ENCODE measurements at regions of chr16 and their contacts with region 1.

Region 1: DNA sequence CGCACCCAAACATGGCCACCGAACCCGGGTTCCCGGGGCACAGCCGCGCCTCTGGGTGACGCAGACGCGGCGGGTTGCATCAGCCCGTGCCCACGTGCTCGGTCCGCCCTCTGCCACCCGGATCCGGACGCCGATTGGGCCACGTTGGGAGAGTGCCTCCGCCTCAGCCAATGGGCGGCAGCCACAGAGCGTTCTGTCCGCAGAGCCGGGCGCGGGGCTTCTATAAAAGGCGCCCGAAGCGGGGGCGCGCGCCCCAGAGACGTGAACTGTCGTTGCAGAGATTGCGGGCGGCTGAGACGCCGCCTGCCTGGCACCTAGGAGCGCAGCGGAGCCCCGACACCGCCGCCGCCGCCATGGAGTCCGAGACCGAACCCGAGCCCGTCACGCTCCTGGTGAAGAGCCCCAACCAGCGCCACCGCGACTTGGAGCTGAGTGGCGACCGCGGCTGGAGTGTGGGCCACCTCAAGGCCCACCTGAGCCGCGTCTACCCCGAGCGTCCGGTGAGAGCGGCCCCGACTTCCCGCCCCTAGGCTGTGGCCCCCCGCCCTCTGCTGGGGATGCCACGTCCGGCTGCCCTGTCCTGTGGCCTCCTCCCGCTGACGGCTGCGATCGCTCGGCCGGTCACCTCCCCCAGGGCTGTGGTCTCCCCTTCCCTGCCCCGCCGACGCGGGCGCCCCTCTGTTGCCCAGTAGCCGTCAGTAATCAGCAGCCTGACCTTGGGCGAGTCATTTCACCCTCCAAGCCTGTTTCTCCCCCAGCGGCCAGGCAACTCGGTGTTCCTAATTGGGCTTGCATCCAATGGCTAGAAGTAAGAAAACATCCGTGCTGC is at the start of gene HERPUD1:
- DNase-seq: peak; percentile 97
- ATAC-seq: peak; percentile 93
- H3K4me3 ChIP-seq: peak within 1 kb of the TSS; percentile 93 to 97 (median 94)
- H3K27ac ChIP-seq: peak within 1 kb of the TSS; percentile 80
- H3K4me1 ChIP-seq: peaks cover 46% of the 10 kb centered on the region
- H3K27me3 ChIP-seq: no peaks in the 10 kb centered on the region; a peak in 1 of 5 replicates
- CTCF ChIP-seq: peak; percentile 34
- EP300 ChIP-seq: peak; percentile 55 to 78; a peak in 2 of 4 replicates
- POLR2A ChIP-seq: peak; percentile 99
- RAD21 ChIP-seq: peak; percentile 81
- total RNA-seq, gene HERPUD1: 65.3 and 96.2 TPM in 2 replicates

Region 2: DNA sequence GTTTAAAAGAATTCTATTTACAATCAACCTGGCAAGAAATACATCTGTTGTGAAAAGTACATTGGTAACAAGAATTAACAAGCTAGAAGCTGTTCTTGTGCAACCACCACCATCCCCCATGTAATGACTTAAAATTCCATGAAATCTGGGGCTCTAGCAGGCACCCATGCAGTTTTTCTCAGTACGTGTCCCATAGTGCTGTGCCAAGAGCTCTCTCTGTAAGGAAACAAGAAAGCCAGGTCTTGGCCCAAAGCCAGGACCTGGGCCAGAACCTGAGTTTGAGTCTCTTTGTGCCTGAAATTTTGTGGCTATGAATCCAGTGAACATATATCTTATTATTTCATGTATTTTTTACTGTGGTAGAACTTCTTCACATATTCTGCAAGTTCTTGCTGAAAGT is 155.5 kb before region 1 on chr16:
- CTCF ChIA-PET with region 1: no interaction called
- POLR2A ChIA-PET with region 1: no interaction called
- in situ Hi-C with region 1: no loop called
- intact Hi-C with region 1: no loop called
- DNase-seq: no peak
- ATAC-seq: no peak
- H3K4me3 ChIP-seq: no peak overlapping the region
- H3K27ac ChIP-seq: no peak overlapping the region
- H3K4me1 ChIP-seq: no peaks in the 10 kb centered on the region
- H3K27me3 ChIP-seq: no peaks in the 10 kb centered on the region
- CTCF ChIP-seq: no peak
- EP300 ChIP-seq: no peak
- POLR2A ChIP-seq: no peak
- RAD21 ChIP-seq: no peak

Region 3: GRCh38 chr16:56800355-56800754 is 131.8 kb before region 1 on chr16:
- CTCF ChIA-PET with region 1: no interaction called
- POLR2A ChIA-PET with region 1: no interaction called
- in situ Hi-C with region 1: no loop called
- intact Hi-C with region 1: no loop called
- DNase-seq: peak; percentile 80
- ATAC-seq: peak; percentile 99
- H3K4me3 ChIP-seq: no peak overlapping the region
- H3K27ac ChIP-seq: peak overlapping the region; percentile 54
- H3K4me1 ChIP-seq: peaks cover 20% of the 10 kb centered on the region
- H3K27me3 ChIP-seq: no peaks in the 10 kb centered on the region
- CTCF ChIP-seq: 0 out of 2 replicates have a peak, but pooled peaks have one; percentile 28
- EP300 ChIP-seq: no peak
- POLR2A ChIP-seq: no peak
- RAD21 ChIP-seq: no peak

Region 4: DNA sequence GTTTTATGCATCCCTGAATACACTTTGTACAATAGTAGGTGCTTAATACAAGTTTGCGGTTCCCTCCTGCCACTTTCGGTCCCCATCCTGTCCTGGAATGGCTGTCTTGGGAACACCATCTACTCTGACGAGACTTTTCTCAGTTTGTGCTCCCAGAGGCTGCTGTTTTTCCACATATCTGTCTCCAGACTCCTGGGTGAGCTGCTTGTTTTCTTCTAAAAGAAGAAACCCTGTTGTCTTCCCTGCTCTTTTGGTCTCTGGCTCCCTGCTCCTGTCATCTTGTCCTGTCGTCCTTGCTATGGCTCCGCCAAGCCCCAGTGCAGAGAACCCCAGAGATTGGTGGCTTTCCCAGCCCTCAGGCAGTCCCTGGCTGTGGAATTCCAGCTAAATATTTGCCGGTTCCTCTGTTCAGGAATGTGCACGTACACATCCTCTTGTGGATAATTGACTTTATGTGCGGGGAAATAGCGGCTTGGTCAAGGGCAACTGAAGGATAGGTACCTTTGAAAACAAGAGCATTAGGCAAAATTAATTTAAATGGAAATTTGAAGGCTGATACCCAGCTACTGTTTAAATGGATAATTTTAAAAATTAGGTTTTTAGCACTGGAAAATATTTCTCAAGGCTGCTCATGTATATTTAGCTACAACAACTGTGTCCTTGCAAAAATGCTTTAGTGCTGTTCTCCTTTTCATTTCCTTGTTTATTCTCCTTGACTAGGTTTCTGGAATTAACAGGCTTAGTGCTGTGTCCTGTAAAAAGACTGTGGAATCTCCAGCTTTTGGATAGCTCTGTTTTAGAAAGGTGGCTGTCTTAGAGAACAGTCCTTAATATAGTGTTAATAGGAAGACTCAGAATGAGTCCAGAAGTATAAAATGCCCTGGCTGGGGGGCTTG is 117.3 kb before region 1 on chr16:
- CTCF ChIA-PET with region 1: no interaction called
- POLR2A ChIA-PET with region 1: interaction called, 12 read pairs
- in situ Hi-C with region 1: no loop called
- intact Hi-C with region 1: loop called (anchors 5 kb)
- DNase-seq: peak; percentile 95
- ATAC-seq: peak; percentile 98
- H3K4me3 ChIP-seq: peak overlapping the region; percentile 14 to 66 (median 49)
- H3K27ac ChIP-seq: peak overlapping the region; percentile 92
- H3K4me1 ChIP-seq: peaks cover 85% of the 10 kb centered on the region
- H3K27me3 ChIP-seq: no peaks in the 10 kb centered on the region
- CTCF ChIP-seq: no peak
- EP300 ChIP-seq: peak in 1 of 2 experiments; percentile 81; a peak in 2 of 4 replicates
- POLR2A ChIP-seq: peak; percentile 51 to 60
- RAD21 ChIP-seq: no peak

Region 5: DNA sequence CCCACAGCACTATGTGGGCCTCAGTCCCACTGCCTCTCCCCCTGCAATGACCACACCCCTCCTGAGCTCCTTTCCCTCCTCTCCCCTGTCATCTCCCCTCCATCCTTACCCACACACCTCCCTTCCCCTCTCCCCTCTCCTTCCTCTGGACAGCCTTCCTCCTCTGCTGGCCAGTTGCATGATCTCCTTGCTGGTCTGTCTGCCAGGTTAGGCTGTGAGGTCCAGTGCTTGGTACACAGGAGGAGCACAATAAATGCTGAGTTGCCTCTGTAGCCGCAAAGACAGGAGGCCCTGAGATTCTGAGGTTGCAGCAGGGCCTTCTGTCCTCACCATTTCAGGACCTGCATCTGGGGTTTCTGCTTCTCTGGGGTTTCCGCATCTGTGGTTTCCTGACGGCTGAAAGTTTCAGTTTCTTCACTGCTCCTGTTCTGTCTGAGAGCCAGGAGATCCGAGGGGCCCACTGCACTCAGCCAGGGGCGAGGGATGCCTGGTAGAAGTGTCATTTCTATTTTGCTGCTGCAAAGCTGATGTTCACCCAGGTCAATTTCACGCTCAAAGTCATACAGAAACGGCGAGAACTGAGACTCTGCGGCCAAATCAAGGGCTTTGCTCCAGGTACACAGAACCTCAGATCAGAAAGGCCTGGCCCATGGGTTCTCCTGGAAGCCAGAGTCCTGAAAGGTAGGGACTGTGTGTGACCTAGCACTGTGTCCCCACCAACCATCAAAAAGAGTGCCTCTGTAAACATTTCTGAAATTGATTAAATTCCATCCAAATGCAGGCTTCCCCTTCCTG is 71.7 kb before region 1 on chr16:
- CTCF ChIA-PET with region 1: no interaction called
- POLR2A ChIA-PET with region 1: interaction called, 12 read pairs
- in situ Hi-C with region 1: no loop called
- intact Hi-C with region 1: no loop called
- DNase-seq: peak; percentile 67
- ATAC-seq: peak; percentile 71
- H3K4me3 ChIP-seq: peak overlapping the region; percentile 33 to 62 (median 44)
- H3K27ac ChIP-seq: peak overlapping the region; percentile 34
- H3K4me1 ChIP-seq: peaks cover 87% of the 10 kb centered on the region
- H3K27me3 ChIP-seq: no peaks in the 10 kb centered on the region
- CTCF ChIP-seq: no peak
- EP300 ChIP-seq: no peak
- POLR2A ChIP-seq: no peak
- RAD21 ChIP-seq: no peak

Region 6: GRCh38 chr16:56866943-56867830 is 64.9 kb before region 1 on chr16:
- CTCF ChIA-PET with region 1: no interaction called
- POLR2A ChIA-PET with region 1: interaction called, 11 read pairs
- in situ Hi-C with region 1: no loop called
- intact Hi-C with region 1: loop called (anchors 5 kb)
- DNase-seq: peak; percentile 70
- ATAC-seq: peak; percentile 6; the same call in 1 of the 3 replicates
- H3K4me3 ChIP-seq: peak overlapping the region in 2 of 3 experiments; percentile 29 to 50; a peak in 4 of 6 replicates
- H3K27ac ChIP-seq: no peak overlapping the region
- H3K4me1 ChIP-seq: peaks cover 56% of the 10 kb centered on the region
- H3K27me3 ChIP-seq: no peaks in the 10 kb centered on the region
- CTCF ChIP-seq: peak; percentile 74
- EP300 ChIP-seq: no peak
- POLR2A ChIP-seq: no peak
- RAD21 ChIP-seq: peak; percentile 59

Region 7: DNA sequence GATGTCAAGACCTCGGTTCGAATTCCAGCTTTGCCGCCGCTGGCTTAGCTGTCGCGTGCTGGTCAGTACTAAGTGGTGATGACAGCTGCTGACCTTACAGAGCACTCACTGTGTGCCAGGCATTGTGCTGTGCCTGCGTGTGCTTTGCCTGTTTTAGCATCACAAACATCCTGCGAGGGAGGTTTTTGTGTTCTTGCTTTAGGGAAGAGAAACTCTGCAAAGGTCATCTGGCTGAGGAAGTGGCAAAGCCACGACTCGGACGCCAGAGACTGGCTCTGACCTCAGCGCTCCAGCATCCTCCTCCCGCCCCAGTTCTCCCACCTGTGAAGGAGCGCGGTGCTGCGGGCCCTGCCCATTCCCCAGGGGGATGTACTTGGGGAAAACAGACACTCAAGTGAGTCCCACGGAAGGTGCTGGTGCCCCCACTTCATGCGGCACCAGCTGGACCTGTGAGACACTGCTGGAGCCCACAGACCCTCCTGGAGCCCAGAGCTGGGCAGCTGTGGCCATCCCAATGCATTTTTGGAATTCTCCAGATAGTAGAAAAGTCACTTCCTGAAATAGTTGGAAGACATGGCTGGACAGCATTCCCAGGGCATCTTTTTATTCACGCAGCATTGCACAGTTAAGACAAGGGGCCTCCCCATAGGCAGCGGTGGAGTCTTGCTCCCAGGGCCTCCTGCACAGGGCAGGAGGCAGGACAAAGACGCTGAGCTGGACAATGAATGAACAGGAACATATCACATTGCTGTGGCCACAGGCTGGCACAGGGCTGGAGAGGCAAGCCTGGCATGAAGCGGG is 20.1 kb before region 1 on chr16:
- CTCF ChIA-PET with region 1: no interaction called
- POLR2A ChIA-PET with region 1: interaction called, 232 read pairs
- in situ Hi-C with region 1: no loop called
- intact Hi-C with region 1: no loop called
- DNase-seq: no peak
- ATAC-seq: peak; percentile 73
- H3K4me3 ChIP-seq: peak overlapping the region in 1 of 3 experiments; percentile 68; a peak in 2 of 6 replicates
- H3K27ac ChIP-seq: no peak overlapping the region
- H3K4me1 ChIP-seq: peaks cover 57% of the 10 kb centered on the region
- H3K27me3 ChIP-seq: peaks cover 0 to 12% of the 10 kb centered on the region in 2 experiments; a peak in 2 of 5 replicates
- CTCF ChIP-seq: no peak
- EP300 ChIP-seq: no peak
- POLR2A ChIP-seq: no peak
- RAD21 ChIP-seq: no peak

Region 8: GRCh38 chr16:56919099-56919800 is 12.9 kb before region 1 on chr16:
- CTCF ChIA-PET with region 1: no interaction called
- POLR2A ChIA-PET with region 1: interaction called, 232 read pairs
- in situ Hi-C with region 1: no loop called
- intact Hi-C with region 1: loop called (anchors 1 kb)
- DNase-seq: peak; percentile 88
- ATAC-seq: peak; percentile 70
- H3K4me3 ChIP-seq: no peak overlapping the region
- H3K27ac ChIP-seq: peak overlapping the region; percentile 59
- H3K4me1 ChIP-seq: peaks cover 91% of the 10 kb centered on the region
- H3K27me3 ChIP-seq: no peaks in the 10 kb centered on the region
- CTCF ChIP-seq: peak; percentile 18; the same call in 1 of the 2 replicates
- EP300 ChIP-seq: peak; percentile 74 to 95; a peak in 3 of 4 replicates
- POLR2A ChIP-seq: no peak
- RAD21 ChIP-seq: peak; percentile 22; the same call in 1 of the 2 replicates

Region 9: GRCh38 chr16:56944954-56945839 is 13.1 kb after region 1 on chr16:
- CTCF ChIA-PET with region 1: no interaction called
- POLR2A ChIA-PET with region 1: interaction called, 39 read pairs
- in situ Hi-C with region 1: no loop called
- intact Hi-C with region 1: no loop called
- DNase-seq: no peak
- ATAC-seq: no peak
- H3K4me3 ChIP-seq: no peak overlapping the region
- H3K27ac ChIP-seq: no peak overlapping the region
- H3K4me1 ChIP-seq: peaks cover 43% of the 10 kb centered on the region
- H3K27me3 ChIP-seq: no peaks in the 10 kb centered on the region
- CTCF ChIP-seq: no peak
- EP300 ChIP-seq: no peak
- POLR2A ChIP-seq: peak; percentile 39 to 50; a peak in 3 of 4 replicates
- RAD21 ChIP-seq: no peak; the same call in 1 of the 2 replicates

Measured in HepG2 (cell line).